ENCODE measurements at regions of chr1 and their contacts with region 1.

Region 1: DNA sequence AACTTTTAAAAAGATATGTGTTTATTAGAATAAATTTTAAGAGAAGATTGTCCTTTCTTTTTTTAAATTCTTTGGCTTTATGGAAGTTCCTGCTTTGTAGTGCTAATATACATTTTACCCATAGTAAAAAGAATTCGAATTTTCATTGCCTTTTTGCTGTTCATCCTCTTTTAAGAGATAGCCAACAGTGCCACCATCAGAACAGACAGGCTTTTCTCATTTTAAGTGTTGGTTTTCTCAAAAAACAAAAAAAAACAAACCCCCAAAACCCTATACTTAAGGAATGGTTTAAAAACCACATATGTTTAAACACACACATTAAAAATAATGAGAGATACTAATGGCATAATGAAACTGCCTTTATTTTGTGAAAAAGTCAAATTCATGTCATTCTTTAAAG is 118.8 kb downstream of the NEK7 start:
- DNase-seq: no peak
- H3K4me3 ChIP-seq: no peak overlapping the region
- H3K27ac ChIP-seq: no peak overlapping the region
- H3K4me1 ChIP-seq: peaks cover 29% of the 10 kb centered on the region
- H3K27me3 ChIP-seq: no peaks in the 10 kb centered on the region
- CTCF ChIP-seq: peak; percentile 26; the same call in 1 of the 2 replicates

Region 2: GRCh38 chr1:198157241-198157846 is 118.3 kb before region 1 on chr1:
- CTCF ChIA-PET with region 1: no interaction called
- POLR2A ChIA-PET with region 1: no interaction called
- intact Hi-C with region 1: loop called (anchors 5 kb)
- DNase-seq: peak; percentile 97
- H3K4me3 ChIP-seq: peak overlapping the region; percentile 92
- H3K27ac ChIP-seq: peak overlapping the region; percentile 74
- H3K4me1 ChIP-seq: peaks cover 35% of the 10 kb centered on the region
- H3K27me3 ChIP-seq: no peaks in the 10 kb centered on the region
- CTCF ChIP-seq: no peak

Region 3: DNA sequence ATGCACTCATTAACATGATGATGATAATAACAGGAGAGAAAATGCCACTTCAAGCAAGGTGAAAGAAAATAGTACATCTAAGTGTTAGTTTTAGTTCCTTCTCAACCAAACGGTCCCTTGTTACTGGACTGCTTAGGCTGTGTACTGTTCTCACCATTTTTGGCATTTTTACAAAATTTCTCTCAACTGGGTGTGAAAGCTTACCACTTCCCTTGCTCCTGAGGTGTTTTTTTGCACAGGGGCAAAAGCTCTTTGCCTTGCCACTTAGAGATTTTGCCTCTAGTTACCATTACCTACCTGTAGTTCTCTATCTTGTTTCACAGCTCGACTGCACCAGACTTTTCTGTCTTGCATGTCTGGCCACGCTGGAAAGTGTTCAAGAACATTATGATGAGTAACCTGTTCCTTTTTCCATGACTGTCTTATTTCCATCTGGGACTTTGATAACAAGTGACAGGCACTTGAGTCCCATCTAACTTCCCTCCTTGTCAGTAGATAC is 108.1 kb before region 1 on chr1:
- CTCF ChIA-PET with region 1: no interaction called
- POLR2A ChIA-PET with region 1: no interaction called
- intact Hi-C with region 1: no loop called
- DNase-seq: no peak
- H3K4me3 ChIP-seq: no peak overlapping the region
- H3K27ac ChIP-seq: no peak overlapping the region
- H3K4me1 ChIP-seq: no peaks in the 10 kb centered on the region
- H3K27me3 ChIP-seq: no peaks in the 10 kb centered on the region
- CTCF ChIP-seq: no peak

Region 4: DNA sequence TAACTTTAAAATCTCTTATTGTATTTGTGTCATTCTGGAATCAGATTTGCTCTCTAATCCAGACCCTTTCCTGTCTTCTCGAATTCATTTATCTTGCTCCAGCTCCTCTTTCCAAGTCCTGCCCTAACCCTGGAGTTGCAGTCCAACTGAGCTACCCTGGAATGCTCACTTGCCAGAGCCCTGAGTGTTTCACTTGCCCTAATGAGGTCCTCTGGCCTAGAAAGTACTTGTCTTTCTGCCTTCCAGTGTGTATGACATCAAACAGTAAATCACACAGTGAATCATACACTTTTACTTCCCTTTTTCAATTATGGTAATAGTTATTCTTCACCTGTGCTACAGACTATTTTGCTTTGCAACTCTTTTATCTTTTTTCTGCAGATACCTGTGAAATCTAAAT is 21.9 kb before region 1 on chr1:
- CTCF ChIA-PET with region 1: no interaction called
- POLR2A ChIA-PET with region 1: no interaction called
- intact Hi-C with region 1: loop called (anchors 1 kb)
- DNase-seq: no peak
- H3K4me3 ChIP-seq: no peak overlapping the region
- H3K27ac ChIP-seq: no peak overlapping the region
- H3K4me1 ChIP-seq: no peaks in the 10 kb centered on the region
- H3K27me3 ChIP-seq: no peaks in the 10 kb centered on the region
- CTCF ChIP-seq: no peak

Region 5: GRCh38 chr1:198595765-198596164 is 320.2 kb after region 1 on chr1:
- CTCF ChIA-PET with region 1: no interaction called
- POLR2A ChIA-PET with region 1: no interaction called
- intact Hi-C with region 1: no loop called
- DNase-seq: no peak
- H3K4me3 ChIP-seq: no peak overlapping the region
- H3K27ac ChIP-seq: no peak overlapping the region
- H3K4me1 ChIP-seq: no peaks in the 10 kb centered on the region
- H3K27me3 ChIP-seq: no peaks in the 10 kb centered on the region
- CTCF ChIP-seq: no peak